ENCODE measurements at regions of chr15 and their contacts with region 1.

Region 1: DNA sequence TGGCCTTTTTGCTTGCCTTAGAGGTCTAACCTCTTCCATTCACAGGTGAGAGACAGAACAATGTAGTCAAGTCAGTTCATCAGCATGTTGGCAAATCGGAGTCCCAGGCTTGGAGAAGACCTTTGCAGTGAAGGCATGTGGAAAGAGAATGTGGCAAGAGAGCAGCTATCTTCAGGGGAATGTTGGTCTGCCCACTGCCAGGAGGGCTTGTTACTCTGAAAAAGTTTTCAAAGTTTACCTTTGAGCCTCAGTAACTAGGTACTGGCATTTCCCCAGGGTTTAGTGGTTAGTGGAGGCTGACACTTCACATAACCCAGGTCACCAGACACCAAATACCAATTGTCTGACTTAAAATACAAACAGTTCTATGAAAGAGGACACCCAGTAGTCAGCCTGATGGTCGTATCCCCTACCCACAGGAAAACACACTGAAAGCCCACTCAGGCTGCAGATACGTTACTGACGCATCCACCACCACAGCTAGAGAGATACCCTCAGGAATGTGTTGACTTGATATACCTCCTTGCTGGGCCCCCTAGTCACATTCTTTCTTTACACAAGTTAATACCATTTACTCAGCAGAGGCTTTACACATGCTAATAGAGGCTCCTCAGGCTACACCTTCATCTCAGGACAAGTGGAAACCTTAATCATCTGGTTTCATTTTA is 9.7 kb upstream of the ARID3B start:
- DNase-seq: peak; percentile 77 to 97
- H3K4me3 ChIP-seq: peak overlapping the region; percentile 32; the same call in 1 of the 2 replicates
- H3K27ac ChIP-seq: peak overlapping the region; percentile 90
- H3K4me1 ChIP-seq: peaks cover 36% of the 10 kb centered on the region
- H3K27me3 ChIP-seq: no peaks in the 10 kb centered on the region
- CTCF ChIP-seq: no peak

Region 2: DNA sequence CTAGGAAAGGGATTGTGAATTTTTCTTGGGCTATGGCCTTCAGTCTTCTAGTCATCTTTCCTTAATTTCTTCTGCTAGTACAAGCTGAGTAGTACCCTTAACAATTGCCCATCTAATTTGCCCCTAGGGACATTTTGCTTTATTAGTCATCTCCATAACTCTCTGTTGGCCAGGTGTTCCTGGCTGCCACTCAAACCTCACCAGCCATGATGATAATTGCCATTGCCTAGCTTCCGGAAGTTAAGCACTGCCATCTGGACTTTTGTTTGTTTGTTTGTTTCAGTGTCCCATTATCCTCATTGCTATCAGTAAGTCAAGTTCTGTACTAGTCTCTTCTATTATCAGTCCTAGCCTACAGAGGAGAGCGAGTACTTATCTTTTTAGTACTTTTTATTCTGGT is 33.7 kb before region 1 on chr15:
- CTCF ChIA-PET with region 1: interaction called, 5 read pairs
- POLR2A ChIA-PET with region 1: interaction called, 24 read pairs
- intact Hi-C with region 1: loop called (anchors 2 kb)
- DNase-seq: peak; percentile 63 to 89
- H3K4me3 ChIP-seq: no peak overlapping the region
- H3K27ac ChIP-seq: peak overlapping the region; percentile 50; the same call in 1 of the 2 replicates
- H3K4me1 ChIP-seq: peaks cover 13% of the 10 kb centered on the region
- H3K27me3 ChIP-seq: no peaks in the 10 kb centered on the region
- CTCF ChIP-seq: no peak